Right ventricle myocardium inferior (tissue), 1 donor: ENCODE measurements at regions of chr16 and their contacts with region 1.

Region 1: GRCh38 chr16:75622761-75623605 is at the start of gene ADAT1:
- DNase-seq: peak; percentile 100
- ATAC-seq: peak; percentile 97
- total RNA-seq, gene ADAT1: 19.5 TPM

Region 2: DNA sequence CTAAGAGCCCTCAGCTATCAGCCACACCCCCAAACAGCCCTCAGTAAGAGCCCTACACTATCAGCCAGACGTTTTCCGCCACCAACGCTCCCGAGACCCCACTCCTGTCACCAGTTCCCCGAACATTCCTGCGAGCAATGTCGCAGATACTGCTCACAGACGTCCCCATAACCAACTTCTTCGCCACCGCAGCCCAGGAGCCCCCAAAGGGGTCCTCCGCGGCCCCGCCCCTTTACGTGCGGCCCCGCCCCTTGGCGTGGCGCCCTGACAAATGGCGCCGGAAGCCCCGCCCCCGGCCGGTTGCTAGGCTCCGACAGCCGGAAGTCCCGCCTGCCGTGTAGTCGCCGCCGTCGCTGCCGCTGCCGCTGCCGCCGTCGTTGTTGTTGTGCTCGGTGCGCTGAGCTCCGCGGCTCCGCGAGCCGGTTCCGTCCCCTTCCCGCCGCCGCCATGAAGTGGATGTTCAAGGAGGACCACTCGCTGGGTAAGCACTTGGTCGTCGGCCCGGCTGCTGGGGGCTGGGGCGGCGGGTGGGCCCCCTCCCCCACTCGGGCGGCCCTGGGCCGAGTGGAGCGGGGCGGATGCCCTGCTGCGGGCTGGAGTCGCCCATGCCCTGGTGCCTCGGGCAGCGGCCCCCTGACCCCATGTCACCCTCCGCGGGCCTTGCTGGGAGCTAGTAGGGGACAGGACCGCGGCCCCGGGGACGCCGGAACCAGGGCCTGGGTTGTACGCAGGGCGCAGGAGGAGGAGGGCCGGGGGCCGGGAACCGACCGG is 56.8 kb before region 1 on chr16 and contains the start of gene GABARAPL2:
- intact Hi-C with region 1: loop called (anchors 5 kb)
- DNase-seq: peak; percentile 93
- ATAC-seq: peak; percentile 94
- total RNA-seq, gene GABARAPL2: 231 TPM